Activated CD4-positive, alpha-beta T cell treated with anti-CD3 and anti-CD28 coated beads, Interleukin-2, amount 10 ng/mL, durations not matched to agents 24 days and 14 days (primary cell): ENCODE measurements at regions of chr2 and their contacts with region 1.

Region 1: DNA sequence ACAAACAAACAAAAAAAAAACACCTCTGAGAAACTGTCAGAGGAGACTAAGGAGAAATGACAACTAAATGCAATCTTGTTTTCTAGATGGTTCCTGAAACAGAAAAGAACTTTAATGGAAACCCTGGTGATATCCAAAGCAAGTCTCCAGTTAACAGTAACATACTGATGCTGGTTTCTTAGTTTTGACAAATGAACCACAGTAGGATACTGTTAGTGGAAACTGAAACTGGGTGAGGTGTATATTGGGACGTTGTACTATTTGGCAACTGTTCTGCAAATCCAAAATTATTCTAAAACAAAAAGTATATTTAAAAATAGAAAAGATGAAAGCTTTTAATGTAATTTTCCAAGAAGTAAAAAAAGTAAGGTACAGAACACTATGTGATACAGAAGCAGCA is 11.4 kb downstream of the SESTD1 start:
- DNase-seq: peak; percentile 45
- H3K4me3 Mint-ChIP-seq: peak overlapping the region; percentile 18
- H3K27ac Mint-ChIP-seq: peak overlapping the region; percentile 66
- H3K4me1 Mint-ChIP-seq: peaks cover 47% of the 10 kb centered on the region
- H3K27me3 Mint-ChIP-seq: peaks cover 3% of the 10 kb centered on the region

Region 2: GRCh38 chr2:179106676-179107428 is 146.4 kb before region 1 on chr2:
- intact Hi-C with region 1: loop called (anchors 5 kb)
- DNase-seq: no peak
- H3K4me3 Mint-ChIP-seq: peak overlapping the region; percentile 38
- H3K27ac Mint-ChIP-seq: peak overlapping the region; percentile 46
- H3K4me1 Mint-ChIP-seq: peaks cover 29% of the 10 kb centered on the region
- H3K27me3 Mint-ChIP-seq: no peaks in the 10 kb centered on the region

Region 3: GRCh38 chr2:179239195-179239594 is 14.0 kb before region 1 on chr2:
- intact Hi-C with region 1: loop called (anchors 1 kb)
- DNase-seq: peak; percentile 71
- H3K4me3 Mint-ChIP-seq: peak overlapping the region; percentile 36
- H3K27ac Mint-ChIP-seq: peak overlapping the region; percentile 47
- H3K4me1 Mint-ChIP-seq: peaks cover 34% of the 10 kb centered on the region
- H3K27me3 Mint-ChIP-seq: no peaks in the 10 kb centered on the region

Region 4: DNA sequence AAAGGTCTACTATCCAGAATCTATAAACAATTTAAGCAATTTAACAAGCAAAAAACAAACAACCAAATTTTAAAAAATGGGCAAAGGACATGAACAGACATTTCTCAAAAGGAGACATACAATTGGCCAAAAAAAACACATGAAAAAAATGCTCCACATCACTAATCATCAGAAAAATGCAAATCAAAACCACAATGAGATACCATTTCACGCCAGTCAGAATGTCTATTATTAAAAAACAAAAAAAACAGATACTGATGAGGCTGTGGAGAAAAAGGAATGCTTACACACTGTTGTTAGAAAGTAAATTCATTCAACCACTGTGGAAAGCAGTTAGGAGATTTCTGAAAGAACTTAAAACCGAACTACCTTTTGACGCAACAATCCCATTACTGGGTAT is 77.8 kb after region 1 on chr2:
- intact Hi-C with region 1: no loop called
- DNase-seq: no peak
- H3K4me3 Mint-ChIP-seq: no peak overlapping the region
- H3K27ac Mint-ChIP-seq: no peak overlapping the region
- H3K4me1 Mint-ChIP-seq: no peaks in the 10 kb centered on the region
- H3K27me3 Mint-ChIP-seq: peaks cover 19% of the 10 kb centered on the region